ENCODE measurements at regions of chr3 and their contacts with region 1.

Region 1: GRCh38 chr3:43769471-43770425 is 79.0 kb downstream of the ABHD5 start:
- DNase-seq: peak; percentile 86
- H3K4me3 Mint-ChIP-seq: no peak overlapping the region
- H3K27ac Mint-ChIP-seq: no peak overlapping the region
- H3K4me1 Mint-ChIP-seq: peaks cover 28% of the 10 kb centered on the region
- H3K27me3 Mint-ChIP-seq: no peaks in the 10 kb centered on the region

Region 2: DNA sequence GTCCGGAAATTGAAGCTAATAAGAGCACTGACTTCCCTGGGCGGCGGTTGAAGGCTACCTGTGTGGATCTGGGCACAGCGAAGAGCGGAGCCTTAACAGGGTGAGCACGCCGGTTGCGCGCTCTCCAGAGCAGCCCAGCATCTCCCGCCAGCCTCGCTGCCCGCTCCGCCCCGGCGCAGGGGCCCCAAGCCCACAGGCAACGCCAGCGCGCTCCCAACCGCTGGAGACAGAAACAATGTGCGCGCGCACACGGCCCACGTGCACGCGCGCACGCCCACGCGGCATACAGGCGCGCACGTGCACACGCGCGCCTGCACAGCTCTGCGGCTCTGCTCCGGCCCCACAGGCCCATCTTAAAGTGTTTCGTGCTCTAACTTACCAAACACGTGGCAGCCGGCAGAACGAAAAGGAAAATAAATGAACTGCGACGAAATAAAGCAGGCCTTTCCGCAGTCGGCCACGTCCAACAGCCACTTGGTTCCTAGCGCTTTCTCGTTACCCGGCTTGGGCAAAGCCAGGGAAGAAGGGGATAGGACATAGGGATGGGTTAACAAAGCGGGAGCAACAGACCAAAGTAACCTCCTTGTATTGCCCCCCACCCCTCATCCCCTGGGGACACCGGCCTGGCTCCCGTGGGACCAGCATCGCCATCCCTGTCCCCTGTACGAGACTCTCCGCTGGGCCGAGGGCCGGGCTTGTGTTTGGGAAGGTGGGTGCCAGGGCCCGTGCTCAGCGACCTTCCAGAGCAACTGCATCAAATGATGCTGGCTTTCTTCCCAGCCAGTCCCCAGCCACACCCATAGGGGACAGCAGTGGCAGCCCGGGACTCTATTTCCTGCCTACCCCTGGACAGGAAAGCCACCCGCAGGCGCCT is 124.7 kb after region 1 on chr3:
- CTCF ChIA-PET with region 1: no interaction called
- POLR2A ChIA-PET with region 1: no interaction called
- intact Hi-C with region 1: loop called (anchors 1 kb)
- DNase-seq: peak; percentile 57
- H3K4me3 Mint-ChIP-seq: peak overlapping the region; percentile 64
- H3K27ac Mint-ChIP-seq: no peak overlapping the region
- H3K4me1 Mint-ChIP-seq: peaks cover 11% of the 10 kb centered on the region
- H3K27me3 Mint-ChIP-seq: peaks cover 42% of the 10 kb centered on the region

Region 3: DNA sequence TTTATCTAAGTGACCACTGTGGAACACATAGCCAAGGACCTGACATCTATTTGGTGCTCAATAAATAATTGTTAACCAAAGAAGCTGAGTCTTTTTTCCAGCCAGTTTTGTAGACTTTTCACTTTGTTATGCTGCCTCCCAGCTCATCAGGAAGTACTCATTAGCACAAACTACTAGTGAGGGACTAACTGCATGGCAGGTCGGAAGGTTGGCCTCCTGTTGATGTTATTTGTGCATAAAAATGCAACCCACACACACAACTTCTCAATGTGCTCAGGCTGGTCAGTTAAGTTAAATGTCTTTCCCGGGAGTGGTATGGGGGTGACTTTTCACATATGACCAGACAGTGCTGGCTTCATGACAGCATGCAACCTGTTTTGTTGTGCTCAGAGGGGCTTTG is 209.0 kb after region 1 on chr3:
- CTCF ChIA-PET with region 1: no interaction called
- POLR2A ChIA-PET with region 1: no interaction called
- intact Hi-C with region 1: no loop called
- DNase-seq: no peak
- H3K4me3 Mint-ChIP-seq: no peak overlapping the region
- H3K27ac Mint-ChIP-seq: no peak overlapping the region
- H3K4me1 Mint-ChIP-seq: no peaks in the 10 kb centered on the region
- H3K27me3 Mint-ChIP-seq: peaks cover 29% of the 10 kb centered on the region

Region 4: GRCh38 chr3:44093531-44093930 is 323.8 kb after region 1 on chr3:
- CTCF ChIA-PET with region 1: no interaction called
- POLR2A ChIA-PET with region 1: no interaction called
- intact Hi-C with region 1: no loop called
- DNase-seq: no peak
- H3K4me3 Mint-ChIP-seq: no peak overlapping the region
- H3K27ac Mint-ChIP-seq: no peak overlapping the region
- H3K4me1 Mint-ChIP-seq: no peaks in the 10 kb centered on the region
- H3K27me3 Mint-ChIP-seq: peaks cover 24% of the 10 kb centered on the region

Region 5: DNA sequence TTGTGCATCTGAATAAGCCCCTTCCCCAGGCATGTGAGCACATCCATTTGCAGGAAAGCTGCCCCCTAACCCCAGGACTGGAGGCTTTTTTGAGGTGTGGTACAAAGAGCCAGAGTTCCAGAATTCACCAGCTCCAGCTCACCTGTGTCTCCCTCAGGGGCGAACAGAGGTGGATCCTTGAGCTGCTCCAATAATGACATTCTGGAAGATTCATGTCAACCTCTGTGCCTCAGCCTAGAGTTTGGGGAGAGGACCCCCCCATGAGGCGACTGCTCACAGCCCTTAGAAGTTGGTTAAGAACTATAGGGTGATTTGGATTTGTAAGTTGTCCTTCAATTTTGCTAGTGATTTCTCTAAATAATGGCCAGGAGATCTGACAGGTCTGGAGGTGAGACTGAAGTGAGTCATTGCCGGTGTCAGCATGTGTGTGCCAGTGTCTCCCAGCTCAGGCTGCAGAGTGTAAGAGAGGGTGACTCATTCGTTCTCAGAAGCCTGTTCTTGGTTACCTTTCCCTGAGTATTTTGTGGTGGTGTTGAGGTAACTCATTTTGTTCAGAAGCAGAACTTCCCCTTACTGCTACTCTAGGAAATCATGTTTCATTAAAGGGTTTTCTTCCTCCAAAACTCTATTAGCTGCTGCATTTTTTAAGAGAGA is 335.0 kb after region 1 on chr3:
- CTCF ChIA-PET with region 1: no interaction called
- POLR2A ChIA-PET with region 1: no interaction called
- intact Hi-C with region 1: loop called (anchors 5 kb)
- DNase-seq: peak; percentile 71
- H3K4me3 Mint-ChIP-seq: no peak overlapping the region
- H3K27ac Mint-ChIP-seq: no peak overlapping the region
- H3K4me1 Mint-ChIP-seq: peaks cover 11% of the 10 kb centered on the region
- H3K27me3 Mint-ChIP-seq: peaks cover 32% of the 10 kb centered on the region

Region 6: GRCh38 chr3:44661189-44661588 is 891.4 kb after region 1 on chr3:
- CTCF ChIA-PET with region 1: no interaction called
- POLR2A ChIA-PET with region 1: no interaction called
- intact Hi-C with region 1: no loop called
- DNase-seq: no peak
- H3K4me3 Mint-ChIP-seq: no peak overlapping the region
- H3K27ac Mint-ChIP-seq: no peak overlapping the region
- H3K4me1 Mint-ChIP-seq: no peaks in the 10 kb centered on the region
- H3K27me3 Mint-ChIP-seq: no peaks in the 10 kb centered on the region